ENCODE measurements at regions of chr1 and their contacts with region 1.

Region 1: GRCh38 chr1:205664376-205665108 is 15.8 kb downstream of the SLC45A3 start:
- DNase-seq: no peak
- H3K4me3 ChIP-seq: no peak overlapping the region
- H3K27ac ChIP-seq: no peak overlapping the region
- H3K4me1 ChIP-seq: peaks cover 34% of the 10 kb centered on the region
- H3K27me3 ChIP-seq: no peaks in the 10 kb centered on the region
- CTCF ChIP-seq: no peak

Region 2: DNA sequence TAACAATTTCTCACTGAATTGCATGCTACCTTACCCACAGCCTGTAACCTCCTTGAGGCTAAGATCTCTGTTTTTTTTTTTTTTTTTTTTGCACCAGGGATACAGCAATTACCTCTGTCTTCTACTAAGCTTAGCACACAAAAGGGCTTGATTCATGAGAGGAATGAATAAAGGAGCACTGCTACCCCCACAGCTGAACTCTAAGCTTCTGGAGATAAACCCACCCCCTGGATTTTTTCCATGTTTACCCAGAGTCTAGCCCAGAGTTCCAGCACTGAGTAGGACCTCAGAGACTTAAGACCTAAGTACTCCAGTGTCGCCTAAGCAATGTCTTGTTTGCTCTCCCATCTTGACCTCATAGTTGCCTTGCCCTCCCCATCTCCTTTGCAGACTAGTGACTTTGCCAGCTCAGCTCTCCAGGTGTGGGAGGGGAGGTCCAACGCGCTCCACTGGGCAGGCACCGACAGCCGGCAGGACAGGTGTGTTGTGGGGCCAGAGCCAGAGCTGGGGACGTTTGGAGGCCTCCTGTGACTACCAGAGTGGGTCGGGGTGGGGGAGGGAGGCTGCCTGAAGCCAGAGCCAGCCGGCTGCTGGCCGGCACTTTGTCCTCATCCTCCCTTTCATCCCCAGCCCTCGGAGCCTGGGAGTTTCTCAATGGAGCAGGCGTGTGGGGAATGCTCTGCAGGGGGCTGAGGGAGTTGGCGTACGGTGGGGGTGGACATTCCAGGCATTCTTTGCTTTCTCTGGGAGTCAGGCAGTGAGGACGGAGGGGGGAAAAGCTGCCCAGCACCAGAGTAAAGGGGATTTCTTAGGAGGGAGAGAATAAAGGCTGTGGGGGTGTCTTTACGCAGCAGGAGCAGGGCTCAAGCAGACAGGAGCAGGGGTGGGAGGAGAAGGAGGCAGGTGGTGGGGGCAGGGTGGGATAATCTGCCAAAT is 363.4 kb before region 1 on chr1:
- intact Hi-C with region 1: no loop called
- DNase-seq: no peak
- H3K4me3 ChIP-seq: no peak overlapping the region
- H3K27ac ChIP-seq: no peak overlapping the region
- H3K4me1 ChIP-seq: peaks cover 6% of the 10 kb centered on the region
- H3K27me3 ChIP-seq: no peaks in the 10 kb centered on the region
- CTCF ChIP-seq: no peak

Region 3: GRCh38 chr1:205711104-205712020 is 46.8 kb after region 1 on chr1:
- intact Hi-C with region 1: loop called (anchors 5 kb)
- DNase-seq: no peak
- H3K4me3 ChIP-seq: no peak overlapping the region
- H3K27ac ChIP-seq: peak overlapping the region; percentile 9
- H3K4me1 ChIP-seq: peaks cover 27% of the 10 kb centered on the region
- H3K27me3 ChIP-seq: no peaks in the 10 kb centered on the region
- CTCF ChIP-seq: peak; percentile 92

Region 4: DNA sequence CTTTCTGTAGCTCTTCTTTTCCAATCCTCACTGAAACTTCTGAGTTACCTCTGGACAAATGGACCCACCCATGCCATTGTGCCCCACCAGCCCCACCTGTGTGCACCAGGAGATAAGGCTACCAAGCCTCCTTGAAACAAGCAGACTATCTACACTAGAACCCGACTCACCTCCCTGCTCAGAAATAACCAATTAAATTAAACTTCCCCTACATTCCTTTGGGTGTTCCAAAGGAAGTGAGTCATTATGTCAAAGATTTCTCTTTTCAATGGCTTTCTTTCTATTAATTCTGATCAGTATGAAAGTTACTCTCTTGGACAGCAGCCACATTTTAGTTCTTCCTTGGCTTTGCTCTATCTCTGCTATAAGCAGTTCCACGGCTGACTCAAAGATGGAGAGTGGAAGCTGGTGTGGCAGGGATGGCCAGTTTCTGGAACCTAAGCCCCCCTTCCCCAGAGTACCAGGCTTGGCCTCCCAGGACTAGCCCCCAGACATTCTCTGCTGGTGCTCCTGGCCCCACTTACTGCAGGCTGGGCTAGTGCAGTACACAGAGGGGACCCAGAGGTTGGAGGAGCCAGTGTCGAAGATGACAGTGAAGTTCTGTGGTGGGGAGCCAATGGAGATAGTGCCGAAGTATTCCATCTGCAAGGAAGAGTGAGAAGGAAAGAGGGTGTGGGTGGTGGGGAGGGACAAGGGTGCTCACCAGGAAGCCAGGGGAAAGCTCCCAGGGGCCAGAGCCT is 357.3 kb after region 1 on chr1:
- intact Hi-C with region 1: no loop called
- DNase-seq: no peak
- H3K4me3 ChIP-seq: no peak overlapping the region
- H3K27ac ChIP-seq: no peak overlapping the region
- H3K4me1 ChIP-seq: no peaks in the 10 kb centered on the region
- H3K27me3 ChIP-seq: no peaks in the 10 kb centered on the region
- CTCF ChIP-seq: no peak

Measured in left ventricle myocardium inferior (tissue), 1 donor.